PC-9 (cell line): ENCODE measurements at regions of chr19 and their contacts with region 1.

Region 1: DNA sequence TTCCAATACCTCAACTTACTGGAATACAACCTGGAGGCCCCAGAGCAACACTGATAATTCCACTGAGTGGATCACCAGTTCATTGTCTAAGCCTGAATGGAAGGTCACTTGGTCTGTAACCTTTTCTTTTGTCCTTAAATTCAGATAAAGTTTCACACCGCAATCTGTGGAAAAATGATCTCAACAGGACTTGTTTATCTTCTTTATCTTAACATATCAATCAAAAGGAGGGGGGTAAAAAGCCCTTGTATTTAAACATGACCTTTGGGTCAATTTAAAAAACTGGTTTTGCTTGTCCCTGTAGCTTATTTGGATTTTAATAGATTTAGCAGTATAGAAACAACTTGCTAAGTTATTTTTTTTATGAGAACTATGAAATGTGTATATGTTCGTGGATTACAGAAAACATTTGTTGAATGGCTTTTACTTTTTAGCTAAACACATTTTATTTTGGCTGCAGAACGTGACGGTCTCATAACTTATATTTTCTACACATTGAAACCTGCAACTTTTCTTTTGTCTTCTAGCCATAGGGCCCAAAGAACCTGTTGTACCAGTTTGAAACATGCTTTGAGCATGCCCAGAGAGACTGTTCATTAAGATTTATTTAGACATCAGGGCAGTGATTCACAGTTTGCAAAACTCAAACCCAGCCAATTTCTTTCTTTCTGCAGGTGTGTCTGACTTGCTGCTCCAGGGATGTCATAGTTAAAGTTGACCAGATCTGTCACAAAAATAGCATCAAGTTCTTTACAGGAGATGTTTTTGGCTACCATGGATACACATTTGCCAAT is 21.8 kb downstream of the SAE1 start:
- DNase-seq: peak; percentile 44 to 98
- H3K4me3 ChIP-seq: peak overlapping the region; percentile 41
- H3K27ac ChIP-seq: peak overlapping the region; percentile 84
- H3K4me1 ChIP-seq: peaks cover 64% of the 10 kb centered on the region
- H3K27me3 ChIP-seq: no peaks in the 10 kb centered on the region
- CTCF ChIP-seq: 0 out of 2 replicates have a peak, but pooled peaks have one; percentile 18

Region 2: GRCh38 chr19:46878613-46879375 is 273.6 kb before region 1 on chr19:
- CTCF ChIA-PET with region 1: no interaction called
- POLR2A ChIA-PET with region 1: no interaction called
- intact Hi-C with region 1: no loop called
- DNase-seq: no peak
- H3K4me3 ChIP-seq: no peak overlapping the region
- H3K27ac ChIP-seq: 0 out of 2 replicates have a peak overlapping the region, but pooled peaks have one; percentile 24
- H3K4me1 ChIP-seq: peaks cover 40% of the 10 kb centered on the region
- H3K27me3 ChIP-seq: no peaks in the 10 kb centered on the region
- CTCF ChIP-seq: no peak

Region 3: GRCh38 chr19:47130591-47131227 is 21.7 kb before region 1 on chr19 and contains the start of gene SAE1:
- CTCF ChIA-PET with region 1: interaction called, 7 read pairs
- POLR2A ChIA-PET with region 1: interaction called, 22 read pairs
- intact Hi-C with region 1: no loop called
- DNase-seq: peak; percentile 96 to 97
- H3K4me3 ChIP-seq: peak within 1 kb of the TSS; percentile 86
- H3K27ac ChIP-seq: peak within 1 kb of the TSS; percentile 30
- H3K4me1 ChIP-seq: peaks cover 40% of the 10 kb centered on the region
- H3K27me3 ChIP-seq: no peaks in the 10 kb centered on the region
- CTCF ChIP-seq: no peak; the same call in 1 of the 2 replicates
- total RNA-seq, gene SAE1: 133 and 148 TPM in 2 replicates

Region 4: DNA sequence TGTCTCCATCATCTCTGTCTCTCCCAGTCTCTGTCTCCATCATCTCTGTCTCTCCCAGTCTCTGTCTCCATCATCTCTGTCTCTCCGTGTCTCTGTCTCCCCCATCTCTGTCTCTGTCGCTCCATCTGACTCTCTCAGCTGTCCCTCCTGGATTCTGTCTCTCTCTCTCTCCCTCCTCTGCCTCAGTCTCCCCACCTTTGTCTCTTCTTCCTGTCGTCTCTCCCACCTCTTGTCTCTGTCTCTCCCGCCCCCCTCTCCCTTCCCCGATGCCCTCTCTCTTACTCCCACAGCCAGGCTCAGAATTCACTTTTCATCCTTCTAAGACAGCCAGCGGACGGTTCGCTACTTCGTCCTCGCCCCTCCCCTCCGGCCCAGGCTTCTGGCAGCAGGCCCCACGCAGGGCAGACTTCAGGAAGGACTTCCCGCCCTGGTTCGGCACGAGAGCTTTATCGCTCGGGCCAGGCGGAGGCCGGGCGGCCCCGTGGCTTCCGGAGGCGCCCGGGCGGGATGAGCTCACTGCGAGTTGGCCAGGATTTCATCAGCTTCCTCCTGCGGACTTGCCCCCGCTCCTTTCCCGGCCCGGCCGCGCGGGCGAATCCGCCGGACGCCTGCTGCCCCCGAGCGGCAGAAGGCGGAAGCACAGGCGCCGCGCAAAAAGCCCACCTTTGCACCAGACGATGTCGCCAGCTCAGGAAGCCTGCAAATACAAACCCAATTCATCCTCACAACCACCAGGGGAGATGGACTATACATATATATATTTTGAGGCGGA is 91.5 kb after region 1 on chr19:
- CTCF ChIA-PET with region 1: interaction called, 6 read pairs
- POLR2A ChIA-PET with region 1: interaction called, 3 read pairs
- intact Hi-C with region 1: loop called (anchors 1 kb)
- DNase-seq: peak; percentile 86 to 95
- H3K4me3 ChIP-seq: peak overlapping the region; percentile 71
- H3K27ac ChIP-seq: peak overlapping the region; percentile 87
- H3K4me1 ChIP-seq: peaks cover 26% of the 10 kb centered on the region
- H3K27me3 ChIP-seq: no peaks in the 10 kb centered on the region
- CTCF ChIP-seq: peak; percentile 98

Region 5: GRCh38 chr19:47421844-47422395 is 269.5 kb after region 1 on chr19:
- CTCF ChIA-PET with region 1: no interaction called
- POLR2A ChIA-PET with region 1: no interaction called
- intact Hi-C with region 1: loop called (anchors 2 kb)
- DNase-seq: no peak
- H3K4me3 ChIP-seq: no peak overlapping the region
- H3K27ac ChIP-seq: no peak overlapping the region
- H3K4me1 ChIP-seq: no peaks in the 10 kb centered on the region
- H3K27me3 ChIP-seq: peaks cover 78% of the 10 kb centered on the region
- CTCF ChIP-seq: no peak